ENCODE measurements at regions of chr11 and their contacts with region 1.

Region 1: DNA sequence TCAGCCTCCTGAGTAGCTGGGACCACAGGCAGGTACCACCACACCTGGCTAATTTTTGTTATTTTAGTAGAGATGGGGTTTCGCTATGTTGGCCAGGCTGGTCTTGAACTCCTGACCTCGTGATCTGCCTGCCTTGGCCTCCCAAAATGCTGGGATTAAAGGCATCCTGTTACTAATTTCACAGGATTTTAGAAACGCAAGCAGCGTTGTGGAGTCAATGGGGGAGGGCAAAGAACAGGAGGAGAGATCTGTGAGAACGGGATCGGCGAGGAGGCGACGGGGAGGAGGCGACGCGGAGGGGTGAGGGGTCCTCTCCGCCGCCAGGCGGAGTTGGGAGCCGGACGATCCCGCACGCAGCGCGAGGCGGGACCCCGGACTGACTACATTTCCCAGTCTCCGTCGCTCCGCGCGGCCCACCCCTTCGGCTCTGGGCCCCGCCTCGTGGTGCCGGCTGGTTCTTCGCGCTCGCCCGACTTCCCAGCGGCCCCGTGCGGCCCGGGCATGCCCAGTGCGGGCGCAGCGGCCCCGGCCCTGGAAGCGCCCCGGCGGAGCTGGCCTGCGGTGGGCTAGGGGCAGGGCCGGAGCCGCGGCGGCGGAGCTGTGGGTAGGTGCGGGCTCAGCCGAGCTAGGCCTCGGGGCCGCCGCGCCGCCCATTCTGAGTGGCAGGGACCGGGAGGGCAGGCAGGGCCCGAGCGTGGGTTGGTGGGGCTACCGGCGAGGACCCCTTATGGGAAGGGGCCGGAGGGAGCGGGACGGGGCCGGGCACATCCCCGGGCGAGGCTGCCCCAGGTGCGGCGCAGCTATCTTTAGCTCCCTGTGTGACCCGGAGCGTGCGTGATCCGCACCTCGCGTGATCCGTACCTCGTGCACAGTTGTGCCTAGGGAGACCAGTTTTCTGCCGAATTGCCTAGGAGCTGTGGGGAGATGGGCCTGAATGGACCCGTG is at the start of gene EI24:
- DNase-seq: peak; percentile 95
- ATAC-seq: peak; percentile 95
- H3K4me3 Mint-ChIP-seq: peak within 1 kb of the TSS; percentile 92
- H3K27ac Mint-ChIP-seq: peak within 1 kb of the TSS; percentile 93
- H3K4me1 Mint-ChIP-seq: peaks cover 24% of the 10 kb centered on the region
- H3K27me3 Mint-ChIP-seq: no peaks in the 10 kb centered on the region
- total RNA-seq, gene EI24: 36.3 to 36.6 TPM

Region 2: DNA sequence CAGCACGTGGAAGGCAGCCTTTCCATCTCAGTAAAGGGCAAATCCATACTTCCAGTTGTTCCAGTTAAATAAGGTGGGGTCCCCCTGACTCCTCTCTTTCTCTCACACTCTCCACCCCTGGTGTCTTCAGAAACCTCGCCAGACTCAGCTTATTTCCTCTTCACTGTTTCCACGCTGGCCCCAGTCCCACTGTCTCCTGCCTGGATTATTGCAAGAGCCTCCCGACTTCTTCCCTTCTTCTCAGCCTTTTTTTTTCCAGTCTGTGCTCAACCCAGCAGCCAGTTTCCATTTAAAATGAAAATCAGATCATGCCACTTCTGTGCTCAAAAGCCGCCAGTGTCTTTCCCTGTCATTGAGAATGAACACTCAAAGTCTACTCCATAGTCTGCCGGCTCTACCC is 273.3 kb before region 1 on chr11:
- CTCF ChIA-PET with region 1: no interaction called
- POLR2A ChIA-PET with region 1: no interaction called
- intact Hi-C with region 1: no loop called
- DNase-seq: no peak
- ATAC-seq: no peak
- H3K4me3 Mint-ChIP-seq: no peak overlapping the region
- H3K27ac Mint-ChIP-seq: no peak overlapping the region
- H3K4me1 Mint-ChIP-seq: no peaks in the 10 kb centered on the region
- H3K27me3 Mint-ChIP-seq: peaks cover 7% of the 10 kb centered on the region

Region 3: GRCh38 chr11:125514336-125515101 is 54.7 kb before region 1 on chr11:
- CTCF ChIA-PET with region 1: interaction called, 3 read pairs
- POLR2A ChIA-PET with region 1: no interaction called
- intact Hi-C with region 1: loop called (anchors 1 to 2 kb)
- DNase-seq: peak; percentile 78
- ATAC-seq: peak; percentile 86
- H3K4me3 Mint-ChIP-seq: peak overlapping the region; percentile 7
- H3K27ac Mint-ChIP-seq: peak overlapping the region; percentile 85
- H3K4me1 Mint-ChIP-seq: peaks cover 39% of the 10 kb centered on the region
- H3K27me3 Mint-ChIP-seq: no peaks in the 10 kb centered on the region

Region 4: DNA sequence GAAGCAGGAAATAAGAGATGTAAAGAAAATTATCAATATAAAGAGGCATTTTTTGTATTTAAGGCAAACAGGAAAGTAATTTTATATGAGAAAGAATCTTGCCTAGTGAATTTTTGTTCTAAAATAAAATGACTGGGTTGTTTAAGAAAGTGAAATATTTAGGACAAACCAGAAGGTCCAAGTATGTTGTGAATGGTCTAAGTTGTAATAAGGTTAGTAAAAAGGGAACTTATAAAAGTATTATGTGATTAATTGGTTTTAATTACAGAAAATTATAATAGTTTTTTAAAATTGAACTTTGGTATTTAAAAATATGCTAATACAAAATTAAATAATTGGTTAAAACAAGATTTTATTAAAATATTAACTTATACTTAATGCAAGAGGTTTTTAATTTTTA is 26.5 kb before region 1 on chr11:
- CTCF ChIA-PET with region 1: no interaction called
- POLR2A ChIA-PET with region 1: no interaction called
- intact Hi-C with region 1: loop called in 1 of 2 experiments (anchors 1 kb)
- DNase-seq: no peak
- ATAC-seq: no peak
- H3K4me3 Mint-ChIP-seq: no peak overlapping the region
- H3K27ac Mint-ChIP-seq: no peak overlapping the region
- H3K4me1 Mint-ChIP-seq: no peaks in the 10 kb centered on the region
- H3K27me3 Mint-ChIP-seq: peaks cover 3% of the 10 kb centered on the region

Region 5: GRCh38 chr11:125592305-125593112 is 23.3 kb after region 1 on chr11 and contains the start of gene STT3A:
- CTCF ChIA-PET with region 1: interaction called, 19 read pairs
- POLR2A ChIA-PET with region 1: interaction called, 9 read pairs
- intact Hi-C with region 1: loop called (anchors 1 kb)
- DNase-seq: peak; percentile 99
- ATAC-seq: peak; percentile 93
- H3K4me3 Mint-ChIP-seq: peak within 1 kb of the TSS; percentile 97
- H3K27ac Mint-ChIP-seq: peak within 1 kb of the TSS; percentile 95
- H3K4me1 Mint-ChIP-seq: peaks cover 48% of the 10 kb centered on the region
- H3K27me3 Mint-ChIP-seq: no peaks in the 10 kb centered on the region
- total RNA-seq, gene STT3A: 127 to 128 TPM

Region 6: GRCh38 chr11:126282736-126283591 is 713.7 kb after region 1 on chr11 and contains the start of gene TIRAP:
- CTCF ChIA-PET with region 1: no interaction called
- POLR2A ChIA-PET with region 1: no interaction called
- intact Hi-C with region 1: loop called in 1 of 2 experiments (anchors 1 kb)
- DNase-seq: peak; percentile 76
- ATAC-seq: peak; percentile 53
- H3K4me3 Mint-ChIP-seq: peak within 1 kb of the TSS; percentile 81
- H3K27ac Mint-ChIP-seq: peak within 1 kb of the TSS; percentile 94
- H3K4me1 Mint-ChIP-seq: peaks cover 46% of the 10 kb centered on the region
- H3K27me3 Mint-ChIP-seq: no peaks in the 10 kb centered on the region
- total RNA-seq, gene TIRAP: 5.3 to 7.5 TPM